Heart right ventricle (tissue), 16 donors: ENCODE measurements at regions of chr4 and their contacts with region 1.

Region 1: GRCh38 chr4:26410385-26411293 is 79.6 kb downstream of the CCKAR start:
- DNase-seq: peak in 1 of 2 donors; percentile 63
- ATAC-seq: peak in 4 of 8 donors; percentile 34 to 71 (median 56)
- H3K4me3 ChIP-seq: no peak overlapping the region
- H3K27ac ChIP-seq: no peak overlapping the region
- H3K4me1 ChIP-seq: peaks cover 4 to 29% (median 17%) of the 10 kb centered on the region in 9 donors
- H3K27me3 ChIP-seq: no peaks in the 10 kb centered on the region
- CTCF ChIP-seq: peak; percentile 38 to 79 (median 70)

Region 2: DNA sequence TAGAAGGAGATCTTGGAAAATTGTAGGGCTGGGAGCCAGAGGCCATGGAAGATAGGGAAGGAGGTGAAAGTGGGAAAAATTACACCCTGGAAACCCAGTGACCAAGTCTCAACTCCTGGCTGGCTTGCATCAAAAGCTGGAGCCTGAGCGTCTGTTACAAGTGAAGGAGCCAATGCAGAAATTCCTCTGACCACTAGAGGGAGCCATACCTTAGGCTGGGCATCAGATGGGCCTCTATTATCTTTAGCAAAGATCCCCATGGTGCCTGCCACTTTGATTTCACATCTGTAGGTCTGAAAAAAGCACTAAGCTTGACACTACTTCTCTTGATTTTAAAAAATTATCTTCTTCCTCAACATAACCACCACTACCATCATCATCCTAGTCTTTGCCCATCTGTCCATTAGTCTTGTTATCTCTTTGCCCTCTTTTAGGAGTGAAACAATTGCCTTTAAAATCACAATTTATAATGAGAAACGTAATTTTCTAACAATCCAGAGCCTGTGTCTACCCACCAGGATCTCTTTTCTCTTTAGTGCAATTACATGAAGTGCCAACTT is 970.6 kb before region 1 on chr4:
- intact Hi-C with region 1: loop called in 1 of 10 experiments (anchors 10 kb)
- DNase-seq: peak in 1 of 2 donors; percentile 61
- ATAC-seq: peak in 7 of 8 donors; percentile 27 to 74 (median 61)
- H3K4me3 ChIP-seq: no peak overlapping the region
- H3K27ac ChIP-seq: peak overlapping the region in 1 of 10 donors; percentile 39
- H3K4me1 ChIP-seq: peaks cover 0 to 16% (median 10%) of the 10 kb centered on the region in 9 donors
- H3K27me3 ChIP-seq: no peaks in the 10 kb centered on the region
- CTCF ChIP-seq: peak; percentile 71 to 94 (median 84)

Region 3: GRCh38 chr4:25925486-25926201 is 485.0 kb before region 1 on chr4:
- intact Hi-C with region 1: loop called in 4 of 10 experiments (anchors 5 to 10 kb)
- DNase-seq: peak; percentile 28 to 37
- ATAC-seq: peak in 2 of 8 donors; percentile 47 to 49
- H3K4me3 ChIP-seq: no peak overlapping the region
- H3K27ac ChIP-seq: no peak overlapping the region
- H3K4me1 ChIP-seq: peaks cover 0 to 64% (median 32%) of the 10 kb centered on the region in 9 donors
- H3K27me3 ChIP-seq: no peaks in the 10 kb centered on the region
- CTCF ChIP-seq: peak; percentile 30 to 67 (median 56)

Region 4: GRCh38 chr4:25986807-25987206 is 423.8 kb before region 1 on chr4:
- intact Hi-C with region 1: loop called in 8 of 10 experiments (anchors 2 to 10 kb)
- DNase-seq: no peak
- ATAC-seq: no peak
- H3K4me3 ChIP-seq: no peak overlapping the region
- H3K27ac ChIP-seq: no peak overlapping the region
- H3K4me1 ChIP-seq: peaks cover 0 to 14% (median 9%) of the 10 kb centered on the region in 9 donors
- H3K27me3 ChIP-seq: no peaks in the 10 kb centered on the region
- CTCF ChIP-seq: no peak

Region 5: GRCh38 chr4:26028793-26029567 is 381.7 kb before region 1 on chr4:
- intact Hi-C with region 1: loop called in 5 of 10 experiments (anchors 2 to 5 kb)
- DNase-seq: peak; percentile 65 to 82
- ATAC-seq: peak; percentile 89 to 95 (median 93)
- H3K4me3 ChIP-seq: peak overlapping the region in 8 of 10 donors; percentile 4 to 37 (median 22)
- H3K27ac ChIP-seq: peak overlapping the region in 2 of 10 donors; percentile 20 to 58
- H3K4me1 ChIP-seq: peaks cover 0 to 37% (median 15%) of the 10 kb centered on the region in 9 donors
- H3K27me3 ChIP-seq: peaks cover 0 to 14% (median 11%) of the 10 kb centered on the region in 7 donors
- CTCF ChIP-seq: peak; percentile 41 to 86 (median 75)

Region 6: GRCh38 chr4:26319467-26319948 is 91.1 kb before region 1 on chr4:
- intact Hi-C with region 1: loop called in 1 of 10 experiments (anchors 5 kb)
- DNase-seq: peak; percentile 96 to 98
- ATAC-seq: peak; percentile 92 to 98 (median 94)
- H3K4me3 ChIP-seq: peak overlapping the region; percentile 57 to 90 (median 78)
- H3K27ac ChIP-seq: peak overlapping the region; percentile 85 to 96 (median 93)
- H3K4me1 ChIP-seq: peaks cover 0 to 45% (median 29%) of the 10 kb centered on the region in 9 donors
- H3K27me3 ChIP-seq: no peaks in the 10 kb centered on the region
- CTCF ChIP-seq: peak in 3 of 9 donors; percentile 20 to 36 (median 33)